Endothelial cell of umbilical vein (primary cell): ENCODE measurements at regions of chr19 and their contacts with region 1.

Region 1: GRCh38 chr19:42396381-42397262 is 6.5 kb upstream of the CNFN start:
- DNase-seq: peak; percentile 100
- H3K4me3 ChIP-seq: peak overlapping the region; percentile 36 to 73 (median 49)
- H3K27ac ChIP-seq: peak overlapping the region; percentile 77
- H3K4me1 ChIP-seq: peaks cover 17% of the 10 kb centered on the region
- H3K27me3 ChIP-seq: no peaks in the 10 kb centered on the region
- CTCF ChIP-seq: no peak
- POLR2A ChIP-seq: peak; percentile 87

Region 2: GRCh38 chr19:42423462-42424344 is 27.1 kb after region 1 on chr19:
- CTCF ChIA-PET with region 1: interaction called, 19 read pairs
- POLR2A ChIA-PET with region 1: no interaction called
- dilution Hi-C with region 1: no loop called
- intact Hi-C with region 1: loop called (anchors 1 kb)
- DNase-seq: peak; percentile 88
- H3K4me3 ChIP-seq: peak overlapping the region; percentile 25 to 52 (median 49)
- H3K27ac ChIP-seq: peak overlapping the region; percentile 55
- H3K4me1 ChIP-seq: peaks cover 29% of the 10 kb centered on the region
- H3K27me3 ChIP-seq: no peaks in the 10 kb centered on the region
- CTCF ChIP-seq: no peak
- POLR2A ChIP-seq: no peak